ENCODE measurements at regions of chr1 and their contacts with region 1.

Region 1: DNA sequence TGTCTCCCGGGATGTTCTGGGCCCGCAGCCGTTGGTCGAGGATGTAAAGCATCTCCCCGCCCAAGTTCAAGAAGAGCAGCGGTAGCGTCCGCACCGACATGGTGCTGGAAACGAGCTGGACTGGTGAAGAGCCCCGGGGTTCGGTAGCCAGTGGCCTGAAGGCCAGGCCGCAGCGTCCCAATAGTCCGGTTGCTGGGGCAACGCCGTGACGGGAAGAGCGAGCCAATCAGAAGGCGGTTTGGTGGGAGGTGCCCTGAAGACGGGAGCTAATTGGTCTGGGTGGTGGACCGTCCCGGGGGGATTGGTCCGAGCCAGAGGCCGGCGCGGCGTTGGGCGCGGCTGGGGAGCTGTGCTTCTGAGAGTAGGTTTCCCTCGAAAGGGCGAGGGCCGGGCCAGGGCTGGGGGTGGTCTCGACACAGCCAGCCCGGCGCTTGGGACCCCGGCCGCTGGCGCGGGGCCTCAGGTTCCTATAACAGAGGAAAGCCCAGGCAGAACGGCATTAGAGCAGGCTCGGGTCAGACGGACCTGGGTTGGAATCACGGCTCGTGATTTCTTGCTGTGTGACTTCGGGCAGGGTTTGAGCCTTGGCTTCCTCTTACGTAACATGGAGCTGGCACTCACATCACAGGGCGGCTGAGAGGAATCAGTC is at the start of gene OSCP1:
- DNase-seq: peak; percentile 63 to 94 (median 80)
- ATAC-seq: peak; percentile 92
- H3K4me3 ChIP-seq: peak within 1 kb of the TSS; percentile 83
- H3K4me3 Mint-ChIP-seq: peak within 1 kb of the TSS; percentile 95
- H3K27ac ChIP-seq: peak within 1 kb of the TSS; percentile 82 to 89
- H3K27ac Mint-ChIP-seq: peak within 1 kb of the TSS; percentile 91
- H3K4me1 ChIP-seq: peaks cover 15% of the 10 kb centered on the region
- H3K4me1 Mint-ChIP-seq: peaks cover 23% of the 10 kb centered on the region
- H3K27me3 ChIP-seq: no peaks in the 10 kb centered on the region
- H3K27me3 Mint-ChIP-seq: no peaks in the 10 kb centered on the region
- CTCF ChIP-seq: no peak
- total RNA-seq, gene OSCP1: 0.82 to 2.4 TPM

Region 2: GRCh38 chr1:36175137-36176095 is 275.0 kb before region 1 on chr1:
- CTCF ChIA-PET with region 1: no interaction called
- POLR2A ChIA-PET with region 1: no interaction called
- intact Hi-C with region 1: no loop called
- DNase-seq: peak in 3 of 14 experiments; percentile 18 to 42 (median 38)
- ATAC-seq: no peak
- H3K4me3 ChIP-seq: no peak overlapping the region
- H3K4me3 Mint-ChIP-seq: no peak overlapping the region
- H3K27ac ChIP-seq: peak overlapping the region; percentile 14 to 29
- H3K27ac Mint-ChIP-seq: peak overlapping the region; percentile 9
- H3K4me1 ChIP-seq: peaks cover 4% of the 10 kb centered on the region
- H3K4me1 Mint-ChIP-seq: peaks cover 10% of the 10 kb centered on the region
- H3K27me3 ChIP-seq: no peaks in the 10 kb centered on the region
- H3K27me3 Mint-ChIP-seq: no peaks in the 10 kb centered on the region
- CTCF ChIP-seq: no peak

Region 3: GRCh38 chr1:36650200-36651065 is 200.0 kb after region 1 on chr1:
- CTCF ChIA-PET with region 1: no interaction called
- POLR2A ChIA-PET with region 1: no interaction called
- intact Hi-C with region 1: loop called in 1 of 2 experiments (anchors 5 kb)
- DNase-seq: peak; percentile 31 to 66 (median 47)
- ATAC-seq: peak; percentile 72
- H3K4me3 ChIP-seq: no peak overlapping the region
- H3K4me3 Mint-ChIP-seq: no peak overlapping the region
- H3K27ac ChIP-seq: no peak overlapping the region
- H3K27ac Mint-ChIP-seq: no peak overlapping the region
- H3K4me1 ChIP-seq: no peaks in the 10 kb centered on the region
- H3K4me1 Mint-ChIP-seq: no peaks in the 10 kb centered on the region
- H3K27me3 ChIP-seq: no peaks in the 10 kb centered on the region
- H3K27me3 Mint-ChIP-seq: peaks cover 67% of the 10 kb centered on the region
- CTCF ChIP-seq: peak; percentile 84